ENCODE measurements at regions of chr12 and their contacts with region 1.

Region 1: GRCh38 chr12:91811481-91812287 is 334.0 kb downstream of the BTG1 start:
- DNase-seq: peak; percentile 61
- H3K4me3 ChIP-seq: no peak overlapping the region
- H3K27ac ChIP-seq: no peak overlapping the region
- H3K4me1 ChIP-seq: 0 out of 2 replicates have a peak, but pooled peaks cover 5% of the 10 kb centered on the region
- H3K27me3 ChIP-seq: no peaks in the 10 kb centered on the region

Region 2: GRCh38 chr12:92136965-92137721 is 325.5 kb after region 1 on chr12:
- in situ Hi-C with region 1: loop called (anchors 10 kb)
- DNase-seq: peak; percentile 90
- H3K4me3 ChIP-seq: peak overlapping the region; percentile 95
- H3K27ac ChIP-seq: peak overlapping the region; percentile 93
- H3K4me1 ChIP-seq: peaks cover 93% of the 10 kb centered on the region
- H3K27me3 ChIP-seq: no peaks in the 10 kb centered on the region

Region 3: DNA sequence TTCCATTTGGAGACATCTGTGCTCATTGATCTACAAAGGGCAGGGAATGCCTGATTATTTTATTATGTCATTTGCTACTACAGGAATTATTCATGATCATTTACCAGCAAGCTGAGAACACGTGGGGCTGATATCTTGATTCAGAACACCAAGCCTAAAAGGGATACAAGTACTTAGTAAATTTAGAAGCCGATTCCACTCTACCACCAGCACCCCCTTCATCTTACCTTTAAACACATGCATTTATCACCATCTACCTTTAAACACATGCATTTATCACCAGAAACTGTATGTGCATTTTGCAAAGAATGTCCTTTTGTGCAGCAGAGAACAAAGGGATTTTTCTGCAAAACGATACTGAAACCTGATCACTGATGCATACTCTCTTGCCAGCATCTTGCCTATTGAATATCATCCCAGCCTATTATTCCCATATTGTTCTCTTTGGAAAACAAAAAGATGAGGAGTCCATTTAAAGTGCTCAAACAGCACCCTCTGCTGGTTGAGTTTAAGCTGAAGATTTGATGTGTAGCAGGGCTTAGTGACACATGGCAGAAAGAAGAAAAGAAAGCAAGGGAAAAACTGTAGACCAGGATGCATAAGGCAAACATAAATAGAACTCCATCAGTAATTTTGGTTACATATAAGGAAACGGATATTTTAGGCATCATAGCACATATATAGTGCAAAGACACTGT is 758.5 kb after region 1 on chr12:
- in situ Hi-C with region 1: loop called (anchors 25 kb)
- DNase-seq: peak; percentile 79
- H3K4me3 ChIP-seq: no peak overlapping the region
- H3K27ac ChIP-seq: no peak overlapping the region
- H3K4me1 ChIP-seq: peaks cover 10% of the 10 kb centered on the region
- H3K27me3 ChIP-seq: no peaks in the 10 kb centered on the region

Region 4: GRCh38 chr12:92649511-92650227 is 838.0 kb after region 1 on chr12:
- in situ Hi-C with region 1: loop called (anchors 10 kb)
- DNase-seq: peak; percentile 92
- H3K4me3 ChIP-seq: peak overlapping the region; percentile 61
- H3K27ac ChIP-seq: peak overlapping the region; percentile 75
- H3K4me1 ChIP-seq: peaks cover 23% of the 10 kb centered on the region
- H3K27me3 ChIP-seq: no peaks in the 10 kb centered on the region

Measured in GM23248 (cell line).